ENCODE measurements at regions of chr6 and their contacts with region 1.

Region 1: GRCh38 chr6:113306552-113307145 is 550.5 kb upstream of the MARCKS start:
- DNase-seq: peak; percentile 9 to 43 (median 19)
- ATAC-seq: peak; percentile 82
- H3K4me3 ChIP-seq: no peak overlapping the region
- H3K27ac ChIP-seq: no peak overlapping the region
- H3K4me1 ChIP-seq: no peaks in the 10 kb centered on the region
- H3K27me3 ChIP-seq: no peaks in the 10 kb centered on the region
- CTCF ChIP-seq: peak; percentile 43 to 57 (median 52)
- EP300 ChIP-seq: no peak
- POLR2A ChIP-seq: no peak
- RAD21 ChIP-seq: peak; percentile 52 to 67

Region 2: GRCh38 chr6:113194090-113194489 is 112.6 kb before region 1 on chr6:
- CTCF ChIA-PET with region 1: no interaction called
- POLR2A ChIA-PET with region 1: no interaction called
- in situ Hi-C with region 1: no loop called
- intact Hi-C with region 1: no loop called
- DNase-seq: no peak
- ATAC-seq: no peak
- H3K4me3 ChIP-seq: no peak overlapping the region
- H3K27ac ChIP-seq: no peak overlapping the region
- H3K4me1 ChIP-seq: no peaks in the 10 kb centered on the region
- H3K27me3 ChIP-seq: no peaks in the 10 kb centered on the region
- CTCF ChIP-seq: no peak
- EP300 ChIP-seq: no peak
- POLR2A ChIP-seq: no peak
- RAD21 ChIP-seq: no peak

Region 3: GRCh38 chr6:113858480-113859348 is 552.1 kb after region 1 on chr6:
- CTCF ChIA-PET with region 1: no interaction called
- POLR2A ChIA-PET with region 1: no interaction called
- in situ Hi-C with region 1: no loop called
- intact Hi-C with region 1: loop called (anchors 5 kb)
- DNase-seq: peak; percentile 73 to 92 (median 90)
- ATAC-seq: peak; percentile 90
- H3K4me3 ChIP-seq: peak overlapping the region; percentile 42
- H3K27ac ChIP-seq: no peak overlapping the region
- H3K4me1 ChIP-seq: peaks cover 6 to 25% of the 10 kb centered on the region in 2 experiments
- H3K27me3 ChIP-seq: peaks cover 0 to 15% of the 10 kb centered on the region in 2 experiments; a peak in 2 of 5 replicates
- CTCF ChIP-seq: peak; percentile 70 to 89 (median 79)
- EP300 ChIP-seq: no peak
- POLR2A ChIP-seq: no peak
- RAD21 ChIP-seq: peak; percentile 89 to 90

Region 4: DNA sequence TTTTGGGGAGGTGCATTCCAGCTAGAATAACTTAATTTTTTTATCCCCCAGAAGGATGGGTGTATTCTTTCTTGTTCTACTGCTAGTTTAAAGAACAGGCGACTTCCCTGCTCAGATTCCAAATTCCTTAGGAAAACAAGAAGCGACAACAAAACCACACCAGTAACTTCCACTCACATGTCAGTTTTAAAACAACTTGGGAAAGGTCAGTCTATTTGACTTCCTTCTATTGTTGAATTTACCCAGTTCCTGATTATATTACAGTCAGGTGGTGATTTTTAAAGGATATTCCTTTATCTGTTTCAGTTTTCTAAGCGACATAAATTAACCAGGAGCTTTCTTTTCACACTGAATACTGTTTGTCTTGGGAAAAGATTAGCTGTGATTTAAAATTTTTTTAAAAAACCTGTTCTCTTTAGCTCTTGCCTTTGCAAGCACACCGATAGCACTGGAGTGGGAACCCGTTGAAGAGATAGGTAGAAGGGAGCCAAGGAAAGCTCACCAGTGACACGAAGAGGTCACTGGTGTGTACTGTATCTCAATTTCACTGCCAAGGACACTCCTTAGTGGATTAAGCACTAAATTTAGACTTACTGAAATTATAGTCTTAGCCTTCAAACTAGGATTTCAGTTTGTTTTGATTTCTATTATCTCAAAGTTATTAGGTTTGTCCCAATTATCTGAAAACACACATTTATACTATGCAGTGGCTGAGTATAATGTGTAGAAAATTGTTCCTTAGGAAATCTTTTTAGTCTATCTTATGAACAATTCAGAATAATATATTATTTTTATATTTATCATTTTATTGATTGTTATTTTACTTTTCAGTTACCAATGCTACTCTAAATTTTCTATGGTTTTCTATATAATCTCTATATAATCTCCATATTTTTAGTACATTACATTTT is 572.8 kb after region 1 on chr6:
- CTCF ChIA-PET with region 1: no interaction called
- POLR2A ChIA-PET with region 1: no interaction called
- in situ Hi-C with region 1: no loop called
- intact Hi-C with region 1: loop called (anchors 5 kb)
- DNase-seq: peak; percentile 36 to 66 (median 50)
- ATAC-seq: peak; percentile 99
- H3K4me3 ChIP-seq: no peak overlapping the region
- H3K27ac ChIP-seq: no peak overlapping the region
- H3K4me1 ChIP-seq: no peaks in the 10 kb centered on the region
- H3K27me3 ChIP-seq: no peaks in the 10 kb centered on the region
- CTCF ChIP-seq: peak; percentile 53 to 76 (median 54)
- EP300 ChIP-seq: no peak
- POLR2A ChIP-seq: no peak
- RAD21 ChIP-seq: peak; percentile 74 to 82

Region 5: GRCh38 chr6:113989675-113990074 is 683.0 kb after region 1 on chr6:
- CTCF ChIA-PET with region 1: no interaction called
- POLR2A ChIA-PET with region 1: no interaction called
- in situ Hi-C with region 1: no loop called
- intact Hi-C with region 1: no loop called
- DNase-seq: no peak
- ATAC-seq: no peak
- H3K4me3 ChIP-seq: no peak overlapping the region
- H3K27ac ChIP-seq: no peak overlapping the region
- H3K4me1 ChIP-seq: no peaks in the 10 kb centered on the region
- H3K27me3 ChIP-seq: no peaks in the 10 kb centered on the region; a peak in 1 of 5 replicates
- CTCF ChIP-seq: no peak
- EP300 ChIP-seq: no peak
- POLR2A ChIP-seq: no peak
- RAD21 ChIP-seq: no peak